Activated T-helper 2 cell treated with anti-CD3 and anti-CD28 coated beads, Interferon-gamma antibody, Interleukin-2, Interleukin-4, amounts not matched to agents 10 μg/mL and 5 μg/mL and 100 μg/mL, durations not matched to agents 14 hours and 24 hours and 36 hours (primary cell): ENCODE measurements at regions of chr4 and their contacts with region 1.

Region 1: DNA sequence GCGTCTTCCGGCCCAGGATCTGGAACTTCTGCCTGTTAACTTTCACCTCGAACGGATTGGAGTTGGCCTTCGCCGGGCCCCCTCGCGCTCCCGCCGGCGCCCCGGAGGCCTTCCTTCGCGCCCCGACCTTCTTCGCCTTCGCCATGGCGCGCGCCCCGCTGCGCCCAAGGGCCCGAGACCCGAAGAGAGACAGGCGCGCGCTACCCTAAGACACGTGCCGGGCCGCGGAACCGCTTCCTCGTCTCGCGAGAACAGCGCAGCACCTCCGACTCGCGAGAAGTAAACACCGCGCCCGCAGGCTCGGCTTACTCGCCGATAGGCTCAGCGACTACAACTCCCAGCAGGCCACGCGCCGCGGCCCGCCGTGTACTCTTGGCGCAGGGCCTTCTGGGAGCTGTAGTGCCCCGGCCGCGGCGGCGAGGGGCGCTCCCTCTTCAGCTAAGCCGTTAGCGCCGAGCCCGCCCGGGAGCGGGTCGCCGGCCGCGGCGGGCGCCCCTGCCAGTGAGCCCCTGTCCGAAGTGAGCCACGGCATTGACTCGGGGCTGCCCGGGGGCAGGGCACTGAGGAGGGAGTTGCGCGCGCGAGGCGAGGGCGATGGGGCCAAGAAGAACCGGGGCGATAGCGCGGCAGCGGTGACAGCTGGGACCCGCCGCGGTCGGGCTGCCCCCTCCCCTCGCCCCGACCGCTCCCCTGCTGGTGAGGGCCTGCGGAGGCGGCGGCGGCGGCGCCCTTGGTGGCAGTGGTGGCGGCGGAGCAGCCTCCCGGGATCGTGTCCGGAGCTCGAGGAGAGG is at the starts of genes GRK4 and NOP14:
- DNase-seq: peak; percentile 97
- H3K4me3 Mint-ChIP-seq: peak within 1 kb of the TSS; percentile 92
- H3K27ac Mint-ChIP-seq: peak within 1 kb of the TSS; percentile 87
- H3K4me1 Mint-ChIP-seq: peaks cover 28% of the 10 kb centered on the region
- H3K27me3 Mint-ChIP-seq: no peaks in the 10 kb centered on the region
- total RNA-seq, gene GRK4: 4.5 and 4.6 TPM in 2 replicates
- total RNA-seq, gene NOP14: 104 and 106 TPM in 2 replicates

Region 2: GRCh38 chr4:2402029-2402428 is 561.3 kb before region 1 on chr4:
- intact Hi-C with region 1: no loop called
- DNase-seq: no peak
- H3K4me3 Mint-ChIP-seq: no peak overlapping the region
- H3K27ac Mint-ChIP-seq: no peak overlapping the region
- H3K4me1 Mint-ChIP-seq: peaks cover 10% of the 10 kb centered on the region
- H3K27me3 Mint-ChIP-seq: no peaks in the 10 kb centered on the region

Region 3: GRCh38 chr4:2418650-2419571 is 544.5 kb before region 1 on chr4 and contains the start of gene CFAP99:
- intact Hi-C with region 1: loop called (anchors 1 kb)
- DNase-seq: peak; percentile 94
- H3K4me3 Mint-ChIP-seq: peak within 1 kb of the TSS; percentile 88
- H3K27ac Mint-ChIP-seq: peak within 1 kb of the TSS; percentile 15
- H3K4me1 Mint-ChIP-seq: peaks cover 31% of the 10 kb centered on the region
- H3K27me3 Mint-ChIP-seq: peaks cover 48% of the 10 kb centered on the region
- total RNA-seq, gene CFAP99: not detected in 2 replicates

Region 4: DNA sequence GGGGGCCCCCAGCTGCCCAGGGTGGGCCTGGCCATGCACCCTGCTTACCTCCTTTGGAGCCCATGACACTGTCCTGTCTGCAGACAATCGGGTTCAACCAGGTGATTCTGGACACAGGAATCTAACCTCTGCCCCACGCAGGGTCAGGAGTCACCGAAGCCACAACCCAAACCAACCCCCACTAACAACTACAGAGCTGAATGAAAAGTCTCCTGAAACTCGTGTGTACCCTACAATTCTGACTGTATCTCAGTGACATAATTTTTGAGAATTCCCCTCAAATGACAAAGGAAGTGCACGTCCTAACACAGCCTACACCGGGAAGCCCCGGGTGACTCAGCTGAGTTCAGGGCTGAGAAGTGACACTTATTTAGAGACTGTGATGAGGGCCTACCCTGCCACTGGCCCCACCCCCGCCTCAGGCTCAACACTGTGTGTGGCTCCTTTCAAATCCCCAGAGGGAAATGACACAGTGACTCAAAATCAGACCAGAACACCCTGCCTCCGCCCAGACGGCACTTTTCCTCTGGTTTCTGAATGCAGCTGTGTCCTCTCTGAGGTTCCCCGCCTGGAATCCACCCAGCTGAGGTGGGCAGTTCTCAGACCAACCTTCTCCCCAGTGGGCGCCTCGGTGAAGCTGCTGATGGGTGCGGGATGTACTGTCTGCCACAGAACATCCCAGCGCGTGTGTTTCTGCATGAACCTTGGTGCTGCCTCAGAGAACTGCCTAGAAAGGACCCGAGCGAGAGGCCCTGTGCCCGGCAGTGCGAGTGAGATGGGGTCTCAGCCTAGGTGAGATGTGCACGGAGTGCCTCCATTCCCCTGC is 217.2 kb before region 1 on chr4:
- intact Hi-C with region 1: loop called (anchors 1 kb)
- DNase-seq: peak; percentile 84
- H3K4me3 Mint-ChIP-seq: peak overlapping the region; percentile 63
- H3K27ac Mint-ChIP-seq: peak overlapping the region; percentile 98
- H3K4me1 Mint-ChIP-seq: peaks cover 53% of the 10 kb centered on the region
- H3K27me3 Mint-ChIP-seq: no peaks in the 10 kb centered on the region

Region 5: DNA sequence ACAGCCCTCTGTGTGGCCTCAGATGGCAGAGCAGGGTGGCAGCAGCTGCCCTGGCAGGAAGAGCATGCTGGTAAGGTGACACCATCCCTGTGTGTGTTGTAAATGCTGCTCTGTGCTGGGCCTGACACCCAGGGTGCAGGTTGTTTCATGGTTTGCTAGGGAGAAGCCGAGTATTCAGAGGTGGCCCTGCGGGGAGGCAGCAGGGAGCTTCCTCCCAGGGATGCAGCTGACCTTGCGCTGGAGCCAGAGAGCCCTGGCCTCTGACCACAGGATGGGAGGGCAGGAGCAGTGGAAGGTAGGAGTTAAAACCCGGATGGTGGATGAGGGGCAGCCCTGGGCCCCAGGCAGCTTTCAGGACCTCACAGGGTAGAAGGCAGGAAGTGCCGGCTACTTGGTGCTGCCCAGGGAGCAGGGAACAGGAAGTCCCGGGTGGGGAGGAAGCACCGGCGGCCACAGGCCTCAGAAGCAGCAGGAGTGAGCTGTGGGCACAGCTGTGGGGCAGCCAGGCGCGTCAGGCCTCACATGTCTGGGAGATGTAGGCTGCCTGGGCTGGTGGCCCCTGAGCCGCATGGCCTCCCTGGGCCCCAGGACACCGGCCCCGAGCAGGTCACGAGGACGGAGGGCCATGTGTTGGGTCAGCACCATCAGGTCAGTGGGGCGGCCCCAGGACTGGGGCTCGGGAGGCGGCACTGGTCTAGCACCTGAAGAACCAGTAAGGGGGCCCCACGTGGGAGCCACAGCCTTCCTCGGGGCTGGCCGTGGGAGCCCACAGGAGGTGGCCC is 151.3 kb before region 1 on chr4:
- intact Hi-C with region 1: no loop called
- DNase-seq: peak; percentile 60
- H3K4me3 Mint-ChIP-seq: peak overlapping the region; percentile 96
- H3K27ac Mint-ChIP-seq: peak overlapping the region; percentile 98
- H3K4me1 Mint-ChIP-seq: peaks cover 37% of the 10 kb centered on the region
- H3K27me3 Mint-ChIP-seq: no peaks in the 10 kb centered on the region

Region 6: GRCh38 chr4:3074078-3074795 is 110.9 kb after region 1 on chr4 and contains the starts of genes HTT and HTT-AS:
- intact Hi-C with region 1: loop called (anchors 1 kb)
- DNase-seq: peak; percentile 90
- H3K4me3 Mint-ChIP-seq: peak within 1 kb of the TSS; percentile 89
- H3K27ac Mint-ChIP-seq: peak within 1 kb of the TSS; percentile 79
- H3K4me1 Mint-ChIP-seq: peaks cover 19% of the 10 kb centered on the region
- H3K27me3 Mint-ChIP-seq: no peaks in the 10 kb centered on the region
- total RNA-seq, gene HTT: 65.3 and 71.9 TPM in 2 replicates
- total RNA-seq, gene HTT-AS: not detected in 2 replicates

Region 7: DNA sequence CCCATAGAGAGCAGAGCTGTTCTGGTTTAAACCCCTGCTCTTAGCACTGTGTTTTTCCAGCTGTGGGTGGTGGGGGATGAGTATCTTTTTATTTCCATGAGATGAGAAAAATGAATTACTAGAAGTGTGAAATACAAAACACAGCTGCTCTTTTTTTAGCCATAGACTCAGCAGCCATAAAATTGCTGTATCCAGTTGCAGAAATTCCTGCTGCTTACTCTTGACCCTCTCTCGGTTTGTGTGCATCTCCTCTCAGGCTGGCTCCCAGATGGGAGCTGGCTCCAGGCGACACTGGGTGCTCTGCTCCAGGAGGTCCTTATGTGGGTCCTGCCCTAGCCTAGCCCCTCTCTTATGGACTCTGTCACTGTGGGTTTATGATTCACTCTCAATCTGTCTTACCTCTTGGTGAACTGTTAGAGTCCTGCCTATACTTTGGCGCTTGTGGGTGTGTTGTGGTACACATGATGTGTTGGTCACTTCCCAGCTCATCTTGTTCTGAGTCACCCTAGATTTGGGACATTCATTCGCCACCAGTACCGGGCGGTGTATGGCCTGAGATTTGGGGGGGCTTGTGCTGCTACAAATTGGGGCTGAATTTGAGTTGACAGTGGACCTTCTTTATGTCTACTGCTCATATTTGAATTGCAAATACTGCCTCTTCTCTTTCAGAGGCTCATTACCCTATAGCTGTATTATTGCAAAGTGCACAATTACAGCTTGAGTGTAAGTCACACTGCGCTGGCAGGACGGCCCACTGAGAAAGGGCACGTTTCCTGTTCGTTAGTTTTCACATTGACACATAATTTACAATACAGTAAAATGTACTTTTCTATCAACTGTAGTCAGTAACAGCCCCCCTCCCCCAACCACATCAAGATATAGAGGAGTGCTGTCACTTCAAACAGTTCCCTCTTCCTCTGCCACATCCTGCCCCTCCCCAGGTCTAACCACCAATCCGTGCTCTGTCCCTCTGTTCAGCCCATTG is 238.6 kb after region 1 on chr4:
- intact Hi-C with region 1: loop called (anchors 10 kb)
- DNase-seq: peak; percentile 80
- H3K4me3 Mint-ChIP-seq: peak overlapping the region; percentile 63
- H3K27ac Mint-ChIP-seq: peak overlapping the region; percentile 99
- H3K4me1 Mint-ChIP-seq: peaks cover 40% of the 10 kb centered on the region
- H3K27me3 Mint-ChIP-seq: no peaks in the 10 kb centered on the region